Activated T-helper 2 cell treated with anti-CD3 and anti-CD28 coated beads, Interferon-gamma antibody, Interleukin-2, Interleukin-4, amounts not matched to agents 10 μg/mL and 5 μg/mL and 100 μg/mL, durations not matched to agents 14 hours and 24 hours and 36 hours (primary cell): ENCODE measurements at regions of chr15 and their contacts with region 1.

Region 1: GRCh38 chr15:74983725-74984231 is 11.6 kb upstream of the SCAMP5 start:
- DNase-seq: peak; percentile 19
- H3K4me3 Mint-ChIP-seq: no peak overlapping the region
- H3K27ac Mint-ChIP-seq: peak overlapping the region; percentile 77
- H3K4me1 Mint-ChIP-seq: peaks cover 9% of the 10 kb centered on the region
- H3K27me3 Mint-ChIP-seq: peaks cover 3% of the 10 kb centered on the region

Region 2: DNA sequence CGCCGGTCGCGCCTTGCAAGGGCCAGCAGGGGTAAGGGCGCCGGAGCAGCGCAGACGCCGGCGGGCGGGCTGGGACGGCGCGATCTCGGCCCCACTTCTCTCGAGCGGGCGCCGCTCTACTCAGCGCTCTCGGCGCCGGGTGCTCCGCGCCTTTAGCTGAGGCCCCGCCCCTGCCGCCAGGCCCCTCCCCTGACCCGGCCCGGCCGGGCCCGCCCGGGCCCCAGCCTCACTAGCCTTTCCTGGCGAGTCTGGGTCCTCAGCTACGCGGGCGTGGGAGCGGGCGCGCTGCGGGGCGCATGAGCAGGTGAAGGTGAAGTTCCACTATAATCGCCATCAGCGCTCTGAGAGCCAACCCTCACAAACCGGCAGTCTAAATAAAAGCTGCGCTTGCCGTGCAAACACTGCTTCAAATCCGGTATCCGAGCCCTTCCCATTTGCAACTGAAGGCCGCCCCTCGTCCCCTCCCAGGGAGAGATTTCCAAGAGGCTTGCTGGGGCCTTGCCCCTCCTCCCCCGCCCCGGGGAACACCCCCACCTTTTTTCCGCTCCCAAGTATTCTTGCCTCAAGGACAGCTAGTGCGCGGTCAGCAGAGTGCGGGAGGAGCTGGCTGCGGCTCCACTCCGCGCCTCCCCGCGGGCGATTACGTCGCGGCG is 27.0 kb before region 1 on chr15 and contains the start of gene RPP25:
- intact Hi-C with region 1: loop called (anchors 1 kb)
- DNase-seq: peak; percentile 67
- H3K4me3 Mint-ChIP-seq: peak within 1 kb of the TSS; percentile 64
- H3K27ac Mint-ChIP-seq: no peak within 1 kb of the TSS
- H3K4me1 Mint-ChIP-seq: peaks cover 32% of the 10 kb centered on the region
- H3K27me3 Mint-ChIP-seq: peaks cover 39% of the 10 kb centered on the region
- total RNA-seq, gene RPP25: 13.1 and 14.2 TPM in 2 replicates